Activated naive CD4-positive, alpha-beta T cell treated with anti-CD3 and anti-CD28 coated beads, Interleukin-2, amount 10 ng/mL, durations not matched to agents 7 days and 5 days (primary cell): ENCODE measurements at regions of chr20 and their contacts with region 1.

Region 1: GRCh38 chr20:19661717-19662636 is 96.1 kb upstream of the RIN2 start:
- DNase-seq: peak; percentile 61
- H3K4me3 Mint-ChIP-seq: no peak overlapping the region
- H3K27ac Mint-ChIP-seq: no peak overlapping the region
- H3K4me1 Mint-ChIP-seq: peaks cover 4% of the 10 kb centered on the region
- H3K27me3 Mint-ChIP-seq: peaks cover 20% of the 10 kb centered on the region

Region 2: GRCh38 chr20:19205977-19206396 is 456.0 kb before region 1 on chr20:
- CTCF ChIA-PET with region 1: interaction called, 34 read pairs
- DNase-seq: peak; percentile 71
- H3K4me3 Mint-ChIP-seq: no peak overlapping the region
- H3K27ac Mint-ChIP-seq: no peak overlapping the region
- H3K4me1 Mint-ChIP-seq: no peaks in the 10 kb centered on the region
- H3K27me3 Mint-ChIP-seq: peaks cover 19% of the 10 kb centered on the region

Region 3: DNA sequence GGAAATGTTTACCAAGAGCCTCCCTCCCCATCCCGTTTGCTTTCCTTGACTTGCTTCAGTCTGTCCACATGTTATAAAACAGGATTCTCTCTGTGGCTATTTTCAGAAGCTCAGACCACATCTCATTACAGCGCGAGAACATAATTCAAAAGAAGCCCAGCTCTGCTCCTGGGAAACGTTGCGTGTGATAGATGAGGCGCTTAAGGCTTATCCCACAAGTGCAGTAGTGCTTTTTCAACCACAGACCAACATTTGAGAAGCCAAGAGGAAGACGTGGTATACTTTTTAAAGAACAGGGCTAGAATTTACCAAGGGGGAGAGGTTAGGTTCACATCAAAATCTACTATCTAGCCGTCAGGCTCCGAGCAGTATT is 210.1 kb before region 1 on chr20:
- CTCF ChIA-PET with region 1: no interaction called
- DNase-seq: no peak
- H3K4me3 Mint-ChIP-seq: no peak overlapping the region
- H3K27ac Mint-ChIP-seq: no peak overlapping the region
- H3K4me1 Mint-ChIP-seq: peaks cover 6% of the 10 kb centered on the region
- H3K27me3 Mint-ChIP-seq: no peaks in the 10 kb centered on the region

Region 4: GRCh38 chr20:19628570-19629169 is 33.3 kb before region 1 on chr20:
- CTCF ChIA-PET with region 1: interaction called, 19 read pairs
- DNase-seq: peak; percentile 58
- H3K4me3 Mint-ChIP-seq: no peak overlapping the region
- H3K27ac Mint-ChIP-seq: no peak overlapping the region
- H3K4me1 Mint-ChIP-seq: no peaks in the 10 kb centered on the region
- H3K27me3 Mint-ChIP-seq: no peaks in the 10 kb centered on the region